Common myeloid progenitor, CD34-positive (primary cell): ENCODE measurements at regions of chr5 and their contacts with region 1.

Region 1: GRCh38 chr5:58477760-58478376 is 13.4 kb upstream of the GAPT start:
- DNase-seq: peak in 2 of 3 donors; percentile 56 to 64
- H3K4me3 ChIP-seq: no peak overlapping the region
- H3K27ac ChIP-seq: no peak overlapping the region
- H3K4me1 ChIP-seq: peaks cover 1 to 12% (median 4%) of the 10 kb centered on the region in 4 experiments
- H3K27me3 ChIP-seq: no peaks in the 10 kb centered on the region

Region 2: DNA sequence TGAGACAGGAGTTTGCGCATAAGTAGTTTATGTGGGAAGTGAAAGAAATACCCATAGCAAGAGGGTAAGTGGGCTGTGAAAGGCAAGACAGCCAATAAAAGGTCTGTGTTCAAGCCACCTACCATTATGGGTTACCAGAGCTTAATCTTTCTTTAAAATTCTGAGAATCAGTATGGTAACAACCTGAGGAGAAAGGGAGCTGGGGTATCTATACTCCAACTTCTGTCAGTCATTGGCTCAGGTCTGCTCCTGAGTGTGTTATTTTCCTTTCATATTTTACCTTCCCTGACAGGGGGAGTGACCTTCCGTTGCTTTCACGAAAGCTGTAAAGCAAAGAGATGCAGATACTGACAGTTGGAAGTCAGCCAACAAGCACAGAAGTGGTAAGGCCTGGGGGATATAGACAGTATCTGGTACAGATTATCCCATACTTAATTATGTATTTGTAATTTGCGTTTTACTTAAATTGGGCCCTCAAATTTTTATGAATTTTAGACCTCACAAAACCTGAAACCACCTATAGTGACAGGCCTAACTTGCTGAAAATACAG is 338.4 kb after region 1 on chr5:
- CTCF ChIA-PET with region 1: interaction called, 23 read pairs
- POLR2A ChIA-PET with region 1: no interaction called
- DNase-seq: no peak
- H3K4me3 ChIP-seq: no peak overlapping the region
- H3K27ac ChIP-seq: no peak overlapping the region
- H3K4me1 ChIP-seq: no peaks in the 10 kb centered on the region
- H3K27me3 ChIP-seq: no peaks in the 10 kb centered on the region

Region 3: GRCh38 chr5:58849921-58850667 is 372.2 kb after region 1 on chr5:
- CTCF ChIA-PET with region 1: interaction called, 153 read pairs
- POLR2A ChIA-PET with region 1: no interaction called
- DNase-seq: peak; percentile 39 to 67 (median 66)
- H3K4me3 ChIP-seq: no peak overlapping the region
- H3K27ac ChIP-seq: no peak overlapping the region
- H3K4me1 ChIP-seq: peaks cover 0 to 3% (median 0%) of the 10 kb centered on the region in 4 experiments
- H3K27me3 ChIP-seq: no peaks in the 10 kb centered on the region